ENCODE measurements at regions of chr11 and their contacts with region 1.

Region 1: DNA sequence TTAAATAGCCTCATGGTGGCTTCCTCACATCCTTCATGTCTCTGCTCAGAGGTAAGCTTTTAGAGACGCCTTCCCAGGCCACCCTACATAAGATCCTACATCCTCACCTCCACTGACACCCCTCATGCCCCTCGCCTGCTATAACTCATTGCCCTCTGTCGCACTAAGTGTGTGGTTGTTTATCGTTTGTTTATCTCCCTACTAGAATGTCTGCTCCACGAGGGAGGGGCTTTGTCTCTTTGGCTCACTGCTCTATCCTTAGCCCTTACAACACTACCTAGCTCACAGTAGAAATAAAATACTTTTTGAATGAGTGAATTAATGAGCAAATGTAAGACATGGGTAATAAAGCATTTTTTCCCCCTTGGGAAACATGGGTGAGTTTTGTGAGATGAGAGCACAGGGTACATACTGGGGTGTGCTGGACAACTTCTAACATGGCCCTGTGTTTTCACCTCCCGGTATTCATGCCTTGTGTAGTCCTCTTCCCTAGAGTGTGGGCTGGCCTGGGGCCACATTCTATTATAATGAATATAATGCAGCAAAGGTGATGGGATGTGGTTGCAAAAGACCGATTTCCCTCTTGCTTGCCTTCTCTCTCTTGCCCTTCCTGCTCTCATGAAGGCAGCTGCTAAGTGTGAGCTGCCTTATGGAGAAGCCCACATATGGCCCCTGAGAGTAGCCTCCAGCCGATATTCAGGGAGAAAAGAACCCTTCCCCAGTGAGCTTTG is 1.4 kb upstream of the CBLIF start:
- DNase-seq: no peak
- H3K4me3 ChIP-seq: no peak overlapping the region
- H3K27ac ChIP-seq: no peak overlapping the region
- H3K4me1 ChIP-seq: no peaks in the 10 kb centered on the region
- H3K27me3 ChIP-seq: no peaks in the 10 kb centered on the region
- CTCF ChIP-seq: no peak

Region 2: GRCh38 chr11:59877784-59878183 is 31.1 kb after region 1 on chr11:
- CTCF ChIA-PET with region 1: no interaction called
- POLR2A ChIA-PET with region 1: no interaction called
- intact Hi-C with region 1: loop called (anchors 2 kb)
- DNase-seq: no peak
- H3K4me3 ChIP-seq: no peak overlapping the region
- H3K27ac ChIP-seq: no peak overlapping the region
- H3K4me1 ChIP-seq: no peaks in the 10 kb centered on the region
- H3K27me3 ChIP-seq: no peaks in the 10 kb centered on the region
- CTCF ChIP-seq: no peak

Region 3: GRCh38 chr11:60133917-60134316 is 287.2 kb after region 1 on chr11:
- CTCF ChIA-PET with region 1: no interaction called
- POLR2A ChIA-PET with region 1: no interaction called
- intact Hi-C with region 1: no loop called
- DNase-seq: no peak
- H3K4me3 ChIP-seq: no peak overlapping the region
- H3K27ac ChIP-seq: no peak overlapping the region
- H3K4me1 ChIP-seq: no peaks in the 10 kb centered on the region
- H3K27me3 ChIP-seq: no peaks in the 10 kb centered on the region
- CTCF ChIP-seq: no peak

Region 4: GRCh38 chr11:60570970-60571369 is 724.2 kb after region 1 on chr11:
- CTCF ChIA-PET with region 1: no interaction called
- POLR2A ChIA-PET with region 1: no interaction called
- intact Hi-C with region 1: no loop called
- DNase-seq: no peak
- H3K4me3 ChIP-seq: no peak overlapping the region
- H3K27ac ChIP-seq: no peak overlapping the region
- H3K4me1 ChIP-seq: no peaks in the 10 kb centered on the region
- H3K27me3 ChIP-seq: no peaks in the 10 kb centered on the region
- CTCF ChIP-seq: no peak

Measured in A673 (cell line).